ENCODE measurements at regions of chrX and their contacts with region 1.

Region 1: GRCh38 chrX:77910108-77910840 is at the start of gene ATP7A:
- DNase-seq: peak; percentile 88 to 92
- H3K4me3 ChIP-seq: peak within 1 kb of the TSS; percentile 65
- H3K4me3 Mint-ChIP-seq: peak within 1 kb of the TSS; percentile 94
- H3K27ac Mint-ChIP-seq: peak within 1 kb of the TSS; percentile 90
- H3K4me1 ChIP-seq: no peaks in the 10 kb centered on the region
- H3K4me1 Mint-ChIP-seq: no peaks in the 10 kb centered on the region
- H3K27me3 ChIP-seq: no peaks in the 10 kb centered on the region
- H3K27me3 Mint-ChIP-seq: no peaks in the 10 kb centered on the region
- CTCF ChIP-seq: peak; percentile 36 to 71
- total RNA-seq, gene ATP7A: 3.1 and 3.6 TPM in 2 replicates

Region 2: DNA sequence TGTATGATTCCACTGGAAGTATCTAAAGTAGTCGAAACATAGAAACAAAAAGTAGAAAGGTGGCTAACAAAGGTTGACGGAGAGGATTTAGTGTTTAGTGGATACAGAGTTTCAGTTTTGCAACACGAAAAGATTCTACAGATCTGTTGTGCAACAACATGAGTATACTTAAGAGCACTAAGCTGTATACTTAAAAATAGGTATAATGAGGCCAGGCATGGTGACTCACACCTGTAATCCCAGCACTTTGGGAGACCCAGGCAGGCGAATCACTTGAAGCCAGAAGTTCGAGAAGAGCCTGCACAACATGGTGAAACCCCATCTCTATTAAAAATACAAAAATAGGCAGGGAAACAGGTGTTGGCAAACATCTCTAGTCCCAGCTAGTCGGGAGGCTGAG is 116.3 kb before region 1 on chrX:
- CTCF ChIA-PET with region 1: no interaction called
- POLR2A ChIA-PET with region 1: no interaction called
- intact Hi-C with region 1: no loop called
- DNase-seq: no peak
- H3K4me3 ChIP-seq: no peak overlapping the region
- H3K4me3 Mint-ChIP-seq: no peak overlapping the region
- H3K27ac Mint-ChIP-seq: no peak overlapping the region
- H3K4me1 ChIP-seq: no peaks in the 10 kb centered on the region
- H3K4me1 Mint-ChIP-seq: no peaks in the 10 kb centered on the region
- H3K27me3 ChIP-seq: no peaks in the 10 kb centered on the region
- H3K27me3 Mint-ChIP-seq: no peaks in the 10 kb centered on the region
- CTCF ChIP-seq: no peak

Region 3: DNA sequence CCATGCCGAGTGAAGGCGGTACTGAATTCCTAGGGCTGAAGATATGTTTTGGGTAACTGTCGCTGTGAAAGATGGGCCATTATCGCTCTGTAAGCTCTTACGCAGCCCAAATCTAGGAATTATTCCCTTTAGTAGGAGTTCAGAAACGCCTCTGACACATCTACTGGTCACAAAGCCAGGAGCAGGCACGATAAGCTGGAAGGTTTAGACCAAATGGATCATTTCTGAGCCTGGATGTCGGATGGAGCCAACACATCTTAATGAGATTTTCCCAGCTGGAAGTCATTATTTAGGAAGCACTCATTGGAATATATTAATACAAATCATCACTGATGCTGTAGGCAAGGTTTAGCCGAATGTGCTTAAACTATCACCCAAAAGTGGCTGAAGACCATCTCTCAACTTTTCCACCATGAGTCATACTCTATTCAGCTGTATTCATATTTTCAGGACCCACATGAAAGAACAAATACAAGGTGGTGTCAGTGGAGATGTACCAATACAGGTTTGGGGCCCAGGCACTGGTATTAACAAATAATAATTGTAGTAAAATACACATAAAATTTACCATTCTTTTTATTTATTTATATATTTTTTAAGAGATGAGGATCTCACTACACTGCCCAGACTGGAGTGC is 90.1 kb before region 1 on chrX:
- CTCF ChIA-PET with region 1: no interaction called
- POLR2A ChIA-PET with region 1: no interaction called
- intact Hi-C with region 1: no loop called
- DNase-seq: no peak
- H3K4me3 ChIP-seq: no peak overlapping the region
- H3K4me3 Mint-ChIP-seq: no peak overlapping the region
- H3K27ac Mint-ChIP-seq: no peak overlapping the region
- H3K4me1 ChIP-seq: no peaks in the 10 kb centered on the region
- H3K4me1 Mint-ChIP-seq: no peaks in the 10 kb centered on the region
- H3K27me3 ChIP-seq: no peaks in the 10 kb centered on the region
- H3K27me3 Mint-ChIP-seq: no peaks in the 10 kb centered on the region
- CTCF ChIP-seq: no peak

Region 4: DNA sequence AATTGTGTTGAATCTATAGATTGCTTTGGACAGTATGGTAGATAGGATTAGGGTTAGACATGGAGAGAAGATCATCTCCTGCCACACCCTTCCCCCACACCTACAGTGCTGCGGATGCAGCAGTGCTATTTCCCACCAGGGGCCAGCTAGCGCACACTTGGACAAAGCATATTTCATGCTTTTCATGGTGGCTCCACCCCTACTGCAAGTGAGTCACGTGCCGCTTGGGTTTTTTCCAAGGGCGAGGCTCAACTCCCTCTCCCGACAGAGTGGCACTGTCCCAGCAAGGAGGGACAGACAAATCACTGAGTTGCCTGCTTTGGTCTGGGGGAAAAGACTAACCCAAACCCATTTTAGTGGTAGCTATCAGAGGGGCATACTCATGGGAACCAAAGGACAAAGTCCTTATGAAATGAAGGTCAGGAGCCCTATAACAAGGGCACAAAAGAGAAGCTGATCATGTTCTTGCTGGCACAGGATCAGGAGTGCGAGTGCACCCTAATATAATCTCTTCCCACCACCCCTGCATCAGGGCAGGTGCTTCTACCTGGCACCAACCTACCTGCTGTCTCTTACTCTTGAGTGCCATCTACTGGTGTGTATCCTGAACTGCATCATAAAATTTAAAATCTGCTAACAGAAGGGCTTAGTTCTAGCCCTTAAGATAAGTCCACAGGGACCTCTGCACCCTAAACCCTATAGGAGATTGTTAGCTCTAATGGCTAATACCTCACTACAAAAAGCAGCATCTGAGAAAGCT is 114.3 kb after region 1 on chrX:
- CTCF ChIA-PET with region 1: interaction called, 4 read pairs
- POLR2A ChIA-PET with region 1: no interaction called
- intact Hi-C with region 1: loop called (anchors 1 kb)
- DNase-seq: peak; percentile 33 to 40
- H3K4me3 ChIP-seq: no peak overlapping the region
- H3K4me3 Mint-ChIP-seq: no peak overlapping the region
- H3K27ac Mint-ChIP-seq: no peak overlapping the region
- H3K4me1 ChIP-seq: no peaks in the 10 kb centered on the region
- H3K4me1 Mint-ChIP-seq: no peaks in the 10 kb centered on the region
- H3K27me3 ChIP-seq: no peaks in the 10 kb centered on the region
- H3K27me3 Mint-ChIP-seq: no peaks in the 10 kb centered on the region
- CTCF ChIP-seq: peak; percentile 42 to 50

Region 5: DNA sequence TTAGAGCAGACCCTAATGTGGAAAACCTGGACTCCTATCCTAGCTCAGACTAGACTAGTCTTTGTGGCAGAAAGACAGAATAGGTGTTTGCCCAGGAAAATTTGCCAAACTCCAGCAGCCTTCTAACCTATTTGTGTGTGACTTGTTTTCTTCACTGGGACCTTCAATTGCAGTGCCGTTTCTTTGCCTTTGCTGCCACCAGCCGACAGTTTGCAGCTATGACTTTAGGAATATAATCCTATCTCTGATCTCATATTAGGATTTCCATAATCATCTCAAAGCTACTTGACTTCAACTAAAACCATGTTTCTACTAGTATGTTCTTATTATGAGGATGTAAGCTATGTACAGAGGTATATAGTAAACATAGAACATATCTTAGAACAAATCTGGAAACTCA is 119.4 kb after region 1 on chrX:
- CTCF ChIA-PET with region 1: interaction called, 4 read pairs
- POLR2A ChIA-PET with region 1: no interaction called
- intact Hi-C with region 1: loop called (anchors 1 kb)
- DNase-seq: peak; percentile 30
- H3K4me3 ChIP-seq: no peak overlapping the region
- H3K4me3 Mint-ChIP-seq: no peak overlapping the region
- H3K27ac Mint-ChIP-seq: no peak overlapping the region
- H3K4me1 ChIP-seq: no peaks in the 10 kb centered on the region
- H3K4me1 Mint-ChIP-seq: no peaks in the 10 kb centered on the region
- H3K27me3 ChIP-seq: no peaks in the 10 kb centered on the region
- H3K27me3 Mint-ChIP-seq: no peaks in the 10 kb centered on the region
- CTCF ChIP-seq: peak; percentile 13 to 41

Region 6: GRCh38 chrX:78103623-78104446 is 193.6 kb after region 1 on chrX and contains the start of gene PGK1:
- CTCF ChIA-PET with region 1: no interaction called
- POLR2A ChIA-PET with region 1: no interaction called
- intact Hi-C with region 1: loop called (anchors 5 kb)
- DNase-seq: peak; percentile 94 to 97
- H3K4me3 ChIP-seq: peak within 1 kb of the TSS; percentile 66
- H3K4me3 Mint-ChIP-seq: peak within 1 kb of the TSS; percentile 88
- H3K27ac Mint-ChIP-seq: peak within 1 kb of the TSS; percentile 85
- H3K4me1 ChIP-seq: no peaks in the 10 kb centered on the region
- H3K4me1 Mint-ChIP-seq: peaks cover 13% of the 10 kb centered on the region
- H3K27me3 ChIP-seq: no peaks in the 10 kb centered on the region
- H3K27me3 Mint-ChIP-seq: no peaks in the 10 kb centered on the region
- CTCF ChIP-seq: no peak
- total RNA-seq, gene PGK1: 391 and 425 TPM in 2 replicates

Measured in Caco-2 (cell line).